CD14-positive monocyte (primary cell): ENCODE measurements at regions of chr18 and their contacts with region 1.

Region 1: GRCh38 chr18:11995445-11996189 is 14.3 kb downstream of the IMPA2 start:
- DNase-seq: peak; percentile 72 to 78 (median 78)
- H3K4me3 ChIP-seq: peak overlapping the region in 2 of 3 experiments; percentile 6 to 64
- H3K4me3 Mint-ChIP-seq: peak overlapping the region; percentile 70 to 85
- H3K27ac ChIP-seq: peak overlapping the region; percentile 49 to 73
- H3K27ac Mint-ChIP-seq: peak overlapping the region; percentile 82 to 92 (median 88)
- H3K4me1 ChIP-seq: peaks cover 31 to 37% of the 10 kb centered on the region in 2 donors
- H3K4me1 Mint-ChIP-seq: peaks cover 40% of the 10 kb centered on the region
- H3K27me3 ChIP-seq: no peaks in the 10 kb centered on the region
- H3K27me3 Mint-ChIP-seq: peaks cover 0 to 2% (median 0%) of the 10 kb centered on the region in 3 donors
- CTCF ChIP-seq: peak; percentile 79

Region 2: DNA sequence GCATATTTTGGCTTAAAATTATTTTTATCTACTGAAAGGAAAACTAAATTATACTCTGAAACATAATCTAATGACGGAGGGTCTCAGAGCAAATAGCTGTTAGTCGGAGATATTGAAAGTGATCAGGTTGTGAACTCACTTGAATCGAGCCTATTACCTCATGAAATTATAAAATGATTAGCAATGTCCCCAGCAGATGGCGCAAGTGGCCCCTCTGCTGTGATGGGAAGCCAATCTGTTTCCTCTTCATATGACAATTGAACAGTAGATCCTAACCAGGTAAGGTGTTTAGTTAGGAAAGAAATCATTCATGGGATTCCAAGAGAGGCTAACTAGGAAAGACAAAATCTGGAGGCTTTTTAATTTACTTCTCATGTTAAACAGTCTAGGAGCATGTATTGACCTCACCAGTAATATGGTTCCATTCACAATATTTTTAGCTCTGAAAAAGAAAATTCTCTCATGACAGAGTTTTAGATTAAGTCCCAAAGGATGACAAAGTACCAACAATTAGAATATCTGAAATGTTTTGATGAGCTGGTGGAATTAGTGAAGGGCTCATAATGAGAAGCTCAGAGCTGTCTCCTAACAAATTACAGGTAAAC is 57.6 kb before region 1 on chr18:
- intact Hi-C with region 1: loop called (anchors 2 kb)
- DNase-seq: peak; percentile 57 to 85 (median 67)
- H3K4me3 ChIP-seq: no peak overlapping the region
- H3K4me3 Mint-ChIP-seq: no peak overlapping the region
- H3K27ac ChIP-seq: no peak overlapping the region
- H3K27ac Mint-ChIP-seq: no peak overlapping the region
- H3K4me1 ChIP-seq: peaks cover 10% of the 10 kb centered on the region in 2 donors
- H3K4me1 Mint-ChIP-seq: peaks cover 19% of the 10 kb centered on the region
- H3K27me3 ChIP-seq: no peaks in the 10 kb centered on the region
- H3K27me3 Mint-ChIP-seq: peaks cover 2 to 5% (median 2%) of the 10 kb centered on the region in 3 donors
- CTCF ChIP-seq: peak; percentile 93